ENCODE measurements at regions of chrX and their contacts with region 1.

Region 1: GRCh38 chrX:131063613-131064012 is 5.5 kb downstream of the ARHGAP36 start:
- DNase-seq: no peak
- H3K4me3 ChIP-seq: no peak overlapping the region
- H3K27ac ChIP-seq: no peak overlapping the region
- H3K4me1 ChIP-seq: no peaks in the 10 kb centered on the region
- H3K27me3 ChIP-seq: peaks cover 28% of the 10 kb centered on the region
- CTCF ChIP-seq: peak; percentile 52

Region 2: DNA sequence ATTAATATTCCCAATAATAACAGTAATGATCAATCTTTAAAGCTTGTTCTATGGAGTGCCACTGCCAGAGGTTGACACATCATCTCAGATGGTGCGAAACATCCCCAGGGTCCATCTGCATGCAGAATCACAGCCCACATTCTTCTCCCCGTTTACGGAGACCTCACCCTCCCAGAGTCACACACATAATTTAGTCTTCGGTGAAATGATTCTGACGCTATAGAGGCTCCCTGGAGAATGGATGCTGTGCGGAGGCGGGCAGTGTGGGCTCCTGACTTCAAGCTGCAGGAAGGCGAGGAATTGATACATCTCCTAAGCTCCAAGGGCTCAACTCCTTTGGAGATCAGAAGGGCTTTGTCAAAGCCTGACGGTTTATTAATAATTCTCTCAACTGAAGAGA is 16.4 kb before region 1 on chrX:
- CTCF ChIA-PET with region 1: no interaction called
- POLR2A ChIA-PET with region 1: interaction called, 10 read pairs
- intact Hi-C with region 1: no loop called
- DNase-seq: no peak
- H3K4me3 ChIP-seq: no peak overlapping the region
- H3K27ac ChIP-seq: no peak overlapping the region
- H3K4me1 ChIP-seq: no peaks in the 10 kb centered on the region
- H3K27me3 ChIP-seq: peaks cover 17% of the 10 kb centered on the region
- CTCF ChIP-seq: no peak